Activated CD4-positive, alpha-beta memory T cell treated with anti-CD3 and anti-CD28 coated beads, Interleukin-2, amount 10 ng/mL, durations not matched to agents 7 days and 5 days (primary cell): ENCODE measurements at regions of chr14 and their contacts with region 1.

Region 1: GRCh38 chr14:60980811-60981632 is at the starts of genes SLC38A6 and TRMT5:
- DNase-seq: peak; percentile 93
- H3K4me3 Mint-ChIP-seq: no peak within 1 kb of the TSS
- H3K27ac Mint-ChIP-seq: no peak within 1 kb of the TSS
- H3K4me1 Mint-ChIP-seq: peaks cover 24% of the 10 kb centered on the region
- H3K27me3 Mint-ChIP-seq: no peaks in the 10 kb centered on the region
- total RNA-seq, gene SLC38A6: 7.5 to 9.4 TPM
- total RNA-seq, gene TRMT5: 6.6 to 7.1 TPM

Region 2: DNA sequence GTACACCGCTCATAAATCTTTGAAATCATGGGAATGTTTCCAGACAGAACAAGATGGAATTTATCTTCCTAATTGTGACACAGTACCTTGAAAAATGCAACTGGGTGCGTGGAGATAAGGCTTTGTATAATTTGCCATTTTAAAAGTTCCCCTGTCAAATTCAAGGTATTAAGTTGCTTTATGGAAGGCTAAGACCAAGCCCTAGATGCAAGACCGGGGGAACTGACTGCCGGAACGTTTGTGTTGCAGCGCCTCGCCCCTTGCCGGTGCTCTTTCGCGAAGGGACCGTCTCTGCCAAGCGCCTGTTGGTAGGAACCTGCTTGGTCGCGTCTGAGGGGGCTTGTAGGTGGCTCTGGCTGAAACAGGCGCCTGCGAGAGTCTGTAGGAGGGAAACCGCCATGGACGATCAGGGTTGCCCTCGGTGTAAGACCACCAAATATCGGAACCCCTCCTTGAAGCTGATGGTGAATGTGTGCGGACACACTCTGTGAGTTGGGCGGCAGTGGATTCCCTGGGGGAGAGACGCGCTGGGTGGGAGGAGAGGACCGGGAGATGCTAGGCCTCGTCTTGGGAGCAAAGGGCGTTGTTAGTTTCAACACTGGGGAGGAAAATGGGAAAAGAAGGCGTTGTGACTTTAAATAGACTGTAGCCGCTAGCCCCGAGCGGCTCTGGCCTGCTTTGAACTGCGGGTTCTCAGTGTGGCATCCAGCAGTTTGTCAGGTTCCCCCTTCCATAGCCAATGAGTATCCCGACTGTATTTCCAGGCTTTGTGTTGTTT is 246.4 kb before region 1 on chr14 and contains the start of gene MNAT1:
- CTCF ChIA-PET with region 1: interaction called, 3 read pairs
- POLR2A ChIA-PET with region 1: interaction called, 12 read pairs
- DNase-seq: peak; percentile 80
- H3K4me3 Mint-ChIP-seq: peak within 1 kb of the TSS; percentile 91
- H3K27ac Mint-ChIP-seq: peak within 1 kb of the TSS; percentile 72
- H3K4me1 Mint-ChIP-seq: peaks cover 20% of the 10 kb centered on the region
- H3K27me3 Mint-ChIP-seq: peaks cover 37% of the 10 kb centered on the region
- total RNA-seq, gene MNAT1: 37.0 to 40.4 TPM

Region 3: GRCh38 chr14:60753264-60754119 is 227.5 kb before region 1 on chr14:
- CTCF ChIA-PET with region 1: no interaction called
- POLR2A ChIA-PET with region 1: interaction called, 14 read pairs
- DNase-seq: peak; percentile 71
- H3K4me3 Mint-ChIP-seq: peak overlapping the region; percentile 50
- H3K27ac Mint-ChIP-seq: peak overlapping the region; percentile 87
- H3K4me1 Mint-ChIP-seq: peaks cover 50% of the 10 kb centered on the region
- H3K27me3 Mint-ChIP-seq: no peaks in the 10 kb centered on the region

Region 4: DNA sequence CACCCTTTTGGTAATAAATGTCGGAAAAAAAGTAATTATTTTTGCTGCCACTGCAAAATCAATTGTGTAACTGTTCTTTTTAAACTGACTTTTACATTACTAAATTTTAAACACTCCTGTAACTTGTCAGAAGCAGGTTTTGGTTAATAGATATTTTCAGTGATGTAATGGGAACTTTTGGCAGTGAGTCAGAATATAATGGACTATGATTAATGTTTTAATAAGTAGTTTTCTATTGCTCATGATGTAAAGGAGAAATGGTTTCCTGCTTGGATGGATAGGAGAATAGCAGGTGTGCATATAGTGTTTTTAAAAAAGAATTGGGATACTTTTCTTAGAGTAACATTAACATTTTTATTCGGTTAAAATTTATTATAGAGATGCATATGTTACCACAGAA is 59.0 kb before region 1 on chr14:
- CTCF ChIA-PET with region 1: no interaction called
- POLR2A ChIA-PET with region 1: no interaction called
- DNase-seq: no peak
- H3K4me3 Mint-ChIP-seq: no peak overlapping the region
- H3K27ac Mint-ChIP-seq: no peak overlapping the region
- H3K4me1 Mint-ChIP-seq: no peaks in the 10 kb centered on the region
- H3K27me3 Mint-ChIP-seq: no peaks in the 10 kb centered on the region

Region 5: DNA sequence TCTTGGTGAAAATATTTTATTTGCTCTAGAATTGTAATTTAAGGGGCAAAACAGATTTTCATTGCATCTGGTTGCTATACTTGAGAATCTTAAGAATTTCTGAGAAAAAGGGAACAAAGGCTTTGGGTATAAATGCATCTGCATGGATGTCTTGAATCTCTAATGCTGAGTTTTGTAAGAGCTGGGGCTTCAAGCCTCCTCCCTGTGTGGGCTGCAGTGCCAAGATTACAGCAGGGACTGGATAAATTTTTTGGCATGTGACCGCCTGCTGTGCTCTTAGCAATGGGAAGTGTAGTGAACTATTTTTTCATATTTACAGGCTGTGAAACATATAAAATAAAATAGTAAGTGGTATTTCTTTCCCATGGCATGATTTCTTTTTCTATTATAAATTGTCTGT is 70.0 kb after region 1 on chr14:
- CTCF ChIA-PET with region 1: no interaction called
- POLR2A ChIA-PET with region 1: no interaction called
- DNase-seq: no peak
- H3K4me3 Mint-ChIP-seq: no peak overlapping the region
- H3K27ac Mint-ChIP-seq: no peak overlapping the region
- H3K4me1 Mint-ChIP-seq: no peaks in the 10 kb centered on the region
- H3K27me3 Mint-ChIP-seq: no peaks in the 10 kb centered on the region